Right cardiac atrium (tissue), 5 donors: ENCODE measurements at regions of chr1 and their contacts with region 1.

Region 1: DNA sequence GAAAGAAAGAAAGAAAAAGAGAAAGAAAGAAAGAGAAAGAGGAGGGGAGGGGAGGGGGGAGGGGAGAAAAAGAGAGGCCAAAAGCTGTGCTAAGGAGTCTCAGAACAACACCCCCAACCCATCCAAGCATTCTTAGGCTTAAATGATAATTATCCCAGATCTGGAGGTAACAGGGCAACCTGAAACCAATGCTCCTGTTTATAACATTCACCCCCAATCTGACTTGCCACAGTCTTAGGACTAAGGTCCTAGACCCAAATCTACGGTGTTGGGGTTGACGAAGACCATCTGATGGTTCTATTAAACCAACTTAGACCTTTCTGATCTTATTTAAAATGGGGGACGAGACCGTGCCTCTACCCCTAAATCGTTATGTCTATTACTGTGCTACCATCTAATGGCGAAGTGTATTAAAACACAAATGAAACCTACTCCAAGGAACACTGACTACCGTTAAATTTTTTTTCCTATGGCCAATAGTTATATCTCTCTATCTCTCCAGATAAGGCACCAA is 119.3 kb upstream of the CDC42BPA start:
- DNase-seq: no peak
- ATAC-seq: peak; percentile 62 to 71
- H3K4me3 ChIP-seq: peak overlapping the region; percentile 21
- H3K27ac ChIP-seq: no peak overlapping the region
- H3K4me1 ChIP-seq: peaks cover 9% of the 10 kb centered on the region
- H3K27me3 ChIP-seq: no peaks in the 10 kb centered on the region

Region 2: DNA sequence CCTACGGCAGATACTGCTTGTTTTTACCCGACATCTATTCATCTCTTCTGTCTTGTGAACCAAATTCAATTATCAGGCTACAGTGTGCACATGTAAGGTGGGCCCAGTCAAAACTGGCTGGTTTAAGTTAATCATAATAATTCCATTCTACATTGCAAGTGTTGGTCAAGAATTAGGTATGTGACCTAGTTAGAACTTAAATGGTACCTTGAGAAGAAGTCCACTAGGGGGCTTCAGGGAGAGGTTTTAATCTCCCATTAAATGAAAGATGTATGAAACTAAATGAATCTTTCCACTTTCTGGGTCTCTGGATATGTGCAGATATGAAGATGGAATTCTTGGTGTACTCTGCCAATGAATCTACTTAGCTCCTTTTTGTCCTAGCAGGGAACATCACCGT is 306.4 kb before region 1 on chr1:
- intact Hi-C with region 1: loop called in 2 of 4 experiments (anchors 10 kb)
- DNase-seq: no peak
- ATAC-seq: no peak
- H3K4me3 ChIP-seq: no peak overlapping the region
- H3K27ac ChIP-seq: no peak overlapping the region
- H3K4me1 ChIP-seq: no peaks in the 10 kb centered on the region
- H3K27me3 ChIP-seq: no peaks in the 10 kb centered on the region

Region 3: DNA sequence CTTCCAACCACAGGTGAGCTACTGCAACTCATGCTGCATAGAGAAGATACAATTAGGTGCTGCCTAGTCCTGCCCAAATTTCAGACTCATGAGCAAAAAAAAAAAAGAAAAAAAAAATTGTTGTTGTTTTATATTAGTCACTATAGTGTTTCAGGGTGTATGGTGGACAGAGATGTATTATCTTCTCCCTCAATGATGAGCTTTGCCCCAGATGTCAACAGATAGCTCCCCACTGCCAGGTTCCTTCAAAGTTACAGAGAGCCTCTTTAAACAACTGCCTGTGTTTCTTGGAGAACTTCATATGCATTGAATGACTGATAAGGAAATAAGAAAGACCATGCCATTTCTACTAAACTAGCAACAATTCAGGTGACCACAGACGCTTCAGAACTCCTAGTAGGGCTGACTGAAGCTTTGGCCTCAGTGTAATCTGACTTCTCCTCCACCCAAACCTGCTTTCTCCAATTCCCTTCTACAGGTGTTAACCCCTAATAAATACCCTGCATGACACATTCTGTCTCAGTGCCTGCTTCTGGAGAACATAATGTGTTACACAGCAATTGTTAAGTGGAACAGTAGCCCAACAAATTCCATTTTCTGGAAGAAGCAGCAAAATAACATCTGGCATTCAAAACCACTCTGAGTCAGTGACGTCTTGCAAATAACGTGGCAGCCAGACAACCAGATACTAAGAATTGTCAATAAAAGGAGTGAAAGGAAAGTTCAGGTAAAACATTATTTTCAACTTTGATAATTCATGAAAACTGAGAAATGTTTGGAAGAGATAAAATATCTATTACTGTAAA is 267.0 kb before region 1 on chr1:
- intact Hi-C with region 1: no loop called
- DNase-seq: no peak
- ATAC-seq: no peak
- H3K4me3 ChIP-seq: no peak overlapping the region
- H3K27ac ChIP-seq: no peak overlapping the region
- H3K4me1 ChIP-seq: peaks cover 4% of the 10 kb centered on the region
- H3K27me3 ChIP-seq: no peaks in the 10 kb centered on the region

Region 4: DNA sequence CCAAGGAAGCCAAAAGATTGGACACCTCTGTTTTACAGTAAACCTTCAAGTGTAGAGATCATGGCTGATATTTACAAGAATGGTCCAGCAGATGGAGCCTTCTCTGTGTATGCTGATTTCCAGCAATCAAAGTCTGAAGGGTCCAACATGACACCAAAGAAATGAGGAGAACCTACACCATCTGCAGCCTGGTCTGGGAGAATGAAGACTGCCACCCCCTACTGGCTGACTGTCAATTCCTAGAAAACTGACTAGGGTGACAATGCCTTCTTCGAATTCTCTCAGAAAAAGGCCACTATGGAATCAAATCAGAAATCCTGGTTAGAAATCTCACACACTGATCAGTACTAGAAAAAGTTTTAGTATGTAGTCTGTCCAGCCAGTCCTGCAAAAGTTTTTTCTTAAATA is 202.6 kb before region 1 on chr1:
- intact Hi-C with region 1: loop called in 3 of 4 experiments (anchors 2 to 5 kb)
- DNase-seq: no peak
- ATAC-seq: peak; percentile 51 to 71
- H3K4me3 ChIP-seq: no peak overlapping the region
- H3K27ac ChIP-seq: no peak overlapping the region
- H3K4me1 ChIP-seq: peaks cover 3% of the 10 kb centered on the region
- H3K27me3 ChIP-seq: no peaks in the 10 kb centered on the region

Region 5: DNA sequence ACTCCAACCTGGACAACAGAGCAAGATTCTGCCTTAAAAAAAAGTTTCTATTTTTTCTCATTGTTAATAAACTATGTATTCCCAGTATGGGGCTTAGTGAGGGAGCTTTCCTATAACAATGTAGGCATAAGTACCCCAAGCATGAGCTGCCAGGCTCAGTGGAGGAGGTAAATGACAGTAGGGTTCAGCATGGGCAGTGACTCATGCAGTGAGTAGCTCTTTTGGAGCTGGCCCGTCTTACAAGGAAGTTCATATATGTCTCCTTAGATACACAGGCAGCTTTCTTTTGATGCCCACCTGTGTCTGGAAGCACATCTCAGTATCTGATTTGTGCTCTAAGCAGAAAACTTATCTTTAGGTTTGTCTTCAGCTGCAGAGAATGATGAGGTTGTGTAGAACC is 183.7 kb after region 1 on chr1:
- intact Hi-C with region 1: no loop called
- DNase-seq: no peak
- ATAC-seq: no peak
- H3K4me3 ChIP-seq: no peak overlapping the region
- H3K27ac ChIP-seq: no peak overlapping the region
- H3K4me1 ChIP-seq: no peaks in the 10 kb centered on the region
- H3K27me3 ChIP-seq: no peaks in the 10 kb centered on the region